Heart left ventricle (tissue), 16 donors: ENCODE measurements at regions of chr4 and their contacts with region 1.

Region 1: GRCh38 chr4:147480891-147481576 is at the start of gene EDNRA:
- DNase-seq: peak; percentile 48 to 68 (median 58)
- ATAC-seq: peak; percentile 34 to 86 (median 76)
- H3K4me3 ChIP-seq: peak within 1 kb of the TSS; percentile 49 to 82 (median 65)
- H3K27ac ChIP-seq: peak within 1 kb of the TSS; percentile 71 to 93 (median 84)
- H3K4me1 ChIP-seq: peaks cover 0 to 34% (median 6%) of the 10 kb centered on the region in 12 donors
- H3K27me3 ChIP-seq: peaks cover 0 to 20% (median 0%) of the 10 kb centered on the region in 9 donors
- CTCF ChIP-seq: no peak
- POLR2A ChIP-seq: no peak
- total RNA-seq, gene EDNRA: 6.8 to 39.0 (median 16.3) TPM

Region 2: GRCh38 chr4:147326591-147326990 is 154.4 kb before region 1 on chr4:
- intact Hi-C with region 1: loop called in 2 of 10 experiments (anchors 2 to 5 kb)
- DNase-seq: no peak
- ATAC-seq: peak in 2 of 4 donors; percentile 19 to 53
- H3K4me3 ChIP-seq: no peak overlapping the region
- H3K27ac ChIP-seq: peak overlapping the region in 9 of 12 donors; percentile 17 to 77 (median 56)
- H3K4me1 ChIP-seq: peaks cover 0 to 37% (median 11%) of the 10 kb centered on the region in 12 donors
- H3K27me3 ChIP-seq: no peaks in the 10 kb centered on the region
- CTCF ChIP-seq: no peak
- POLR2A ChIP-seq: no peak

Region 3: GRCh38 chr4:147361726-147362125 is 119.3 kb before region 1 on chr4:
- intact Hi-C with region 1: loop called in 1 of 10 experiments (anchors 5 kb)
- DNase-seq: peak in 3 of 5 donors; percentile 45 to 46 (median 46)
- ATAC-seq: peak; percentile 30 to 86 (median 71)
- H3K4me3 ChIP-seq: no peak overlapping the region
- H3K27ac ChIP-seq: peak overlapping the region; percentile 39 to 87 (median 72)
- H3K4me1 ChIP-seq: peaks cover 0 to 35% (median 10%) of the 10 kb centered on the region in 12 donors
- H3K27me3 ChIP-seq: no peaks in the 10 kb centered on the region
- CTCF ChIP-seq: no peak
- POLR2A ChIP-seq: no peak